G401 (cell line): ENCODE measurements at regions of chr6 and their contacts with region 1.

Region 1: DNA sequence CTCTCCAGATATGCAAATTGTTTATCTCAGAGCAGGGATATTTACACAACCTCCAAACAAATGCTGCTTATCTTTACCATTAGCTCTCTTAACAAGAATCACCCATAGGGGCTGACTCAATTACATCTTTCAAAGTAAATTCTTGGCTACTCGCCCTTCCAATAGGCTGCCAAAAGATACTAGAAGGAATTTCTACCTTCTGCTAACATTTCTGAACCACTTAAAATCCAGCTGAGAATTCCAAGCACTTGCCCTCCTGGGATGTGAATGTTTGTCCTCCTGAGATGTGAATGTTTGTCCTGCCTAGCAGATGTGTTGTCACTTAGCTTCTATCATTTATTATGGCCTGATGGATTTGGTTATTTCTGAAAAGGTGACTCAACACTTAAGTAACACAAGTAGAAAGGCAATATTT is 388.0 kb downstream of the GJA1 start:
- DNase-seq: peak; percentile 64

Region 2: GRCh38 chr6:121399966-121400365 is 423.5 kb before region 1 on chr6:
- in situ Hi-C with region 1: no loop called
- DNase-seq: no peak

Region 3: GRCh38 chr6:121430514-121431460 is 392.7 kb before region 1 on chr6:
- in situ Hi-C with region 1: loop called (anchors 25 kb)
- DNase-seq: peak; percentile 58

Region 4: DNA sequence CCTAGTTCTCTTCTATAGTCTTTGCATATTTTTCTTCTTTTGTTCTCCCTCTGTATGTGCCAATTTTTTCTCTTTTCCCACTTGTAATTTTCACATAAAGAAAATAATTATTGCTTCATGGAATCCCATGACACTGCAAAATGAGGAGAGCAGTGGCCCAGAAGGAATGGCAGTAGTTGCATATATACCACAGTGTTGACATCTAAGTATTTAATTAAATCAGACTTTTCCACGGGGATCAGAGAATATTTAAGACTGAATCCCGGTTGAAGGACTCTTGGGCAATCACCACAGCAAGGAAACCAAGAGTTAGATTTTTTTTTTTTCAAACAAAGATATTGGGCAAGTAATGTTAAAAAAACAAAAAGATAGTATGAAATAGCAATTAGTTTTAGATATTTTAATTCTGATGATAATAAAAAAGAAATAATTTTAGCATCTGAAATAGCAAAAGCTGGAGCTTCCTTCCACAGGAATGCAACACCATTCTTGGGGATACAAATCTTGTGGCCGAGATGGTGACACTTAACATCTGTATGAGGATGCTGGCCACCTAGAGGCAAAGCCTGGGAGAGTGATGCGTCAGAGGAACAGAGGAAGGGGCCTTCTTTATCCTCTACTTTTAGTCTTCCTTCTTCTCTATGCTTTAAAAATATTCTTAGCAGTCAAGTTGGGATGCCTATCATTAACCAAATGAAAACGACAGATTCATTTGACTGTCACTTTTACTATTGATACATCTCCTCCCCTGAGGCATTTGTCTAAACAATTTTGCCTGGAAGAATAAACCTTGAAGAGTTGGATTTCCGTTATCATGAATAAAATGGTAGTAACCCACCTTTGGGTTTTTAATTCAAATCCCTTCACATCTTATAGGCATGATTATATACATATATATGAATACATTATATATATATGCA is 31.8 kb before region 1 on chr6:
- in situ Hi-C with region 1: no loop called
- DNase-seq: no peak